ENCODE measurements at regions of chr6 and their contacts with region 1.

Region 1: GRCh38 chr6:11232193-11232769 is at the start of gene NEDD9:
- DNase-seq: peak; percentile 99
- ATAC-seq: peak; percentile 98
- H3K4me3 Mint-ChIP-seq: peak within 1 kb of the TSS; percentile 92
- H3K27ac Mint-ChIP-seq: peak within 1 kb of the TSS; percentile 100
- H3K4me1 Mint-ChIP-seq: peaks cover 72% of the 10 kb centered on the region
- H3K27me3 Mint-ChIP-seq: no peaks in the 10 kb centered on the region
- total RNA-seq, gene NEDD9: 84.5 to 114 TPM

Region 2: GRCh38 chr6:11212625-11213024 is 19.7 kb before region 1 on chr6:
- CTCF ChIA-PET with region 1: interaction called, 11 read pairs
- DNase-seq: no peak
- ATAC-seq: no peak
- H3K4me3 Mint-ChIP-seq: no peak overlapping the region
- H3K27ac Mint-ChIP-seq: peak overlapping the region; percentile 12
- H3K4me1 Mint-ChIP-seq: peaks cover 61% of the 10 kb centered on the region
- H3K27me3 Mint-ChIP-seq: no peaks in the 10 kb centered on the region

Region 3: GRCh38 chr6:11245381-11246256 is 13.3 kb after region 1 on chr6:
- CTCF ChIA-PET with region 1: no interaction called
- DNase-seq: no peak
- ATAC-seq: no peak
- H3K4me3 Mint-ChIP-seq: no peak overlapping the region
- H3K27ac Mint-ChIP-seq: no peak overlapping the region
- H3K4me1 Mint-ChIP-seq: peaks cover 12% of the 10 kb centered on the region
- H3K27me3 Mint-ChIP-seq: no peaks in the 10 kb centered on the region

Region 4: DNA sequence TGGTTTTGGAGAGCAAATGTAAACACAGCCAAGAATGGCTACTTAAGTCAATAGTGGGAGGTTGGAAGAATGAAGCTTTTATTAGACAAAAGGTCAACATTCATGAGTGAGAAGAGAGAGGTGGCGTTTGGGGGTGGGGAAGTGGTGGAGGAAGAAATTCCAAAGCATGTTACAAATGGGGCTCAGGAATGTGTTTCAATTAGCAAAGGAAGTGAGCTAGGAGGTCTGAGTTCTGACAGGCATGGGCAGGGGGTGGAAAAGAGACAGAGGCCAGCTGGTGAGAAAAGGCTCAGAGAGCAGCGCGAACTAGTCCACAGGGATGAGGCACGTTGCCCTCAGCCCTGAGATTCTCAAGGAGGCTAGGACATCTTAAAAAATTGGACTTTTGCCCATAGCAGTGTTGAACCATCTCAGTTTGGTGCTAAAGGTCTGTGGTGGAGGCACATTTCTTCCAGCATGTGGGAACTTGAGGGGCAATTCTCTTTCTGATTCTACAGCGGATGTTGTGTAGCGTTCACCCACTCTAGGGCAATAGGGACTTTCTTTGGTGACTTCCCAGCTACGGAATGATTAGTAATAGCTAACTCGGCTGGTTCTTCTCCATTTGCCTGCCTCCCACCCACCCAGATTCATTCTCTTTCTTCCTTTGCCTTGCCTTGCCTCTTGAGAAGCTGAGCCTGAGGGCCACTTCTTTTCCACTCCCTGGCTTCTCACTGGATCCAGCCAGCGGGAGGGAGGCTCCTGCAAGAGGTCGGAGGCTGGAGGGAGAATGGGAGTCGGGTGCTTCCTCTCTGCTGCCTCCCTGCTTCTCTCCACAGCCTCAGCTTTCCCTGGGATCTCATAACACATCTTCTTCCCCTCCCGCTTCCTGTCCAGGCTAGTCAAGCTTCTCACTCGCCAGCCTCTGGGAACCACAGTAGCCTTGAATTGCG is 45.3 kb after region 1 on chr6:
- CTCF ChIA-PET with region 1: interaction called, 10 read pairs
- DNase-seq: peak; percentile 54
- ATAC-seq: peak; percentile 57
- H3K4me3 Mint-ChIP-seq: peak overlapping the region; percentile 70
- H3K27ac Mint-ChIP-seq: peak overlapping the region; percentile 97
- H3K4me1 Mint-ChIP-seq: peaks cover 52% of the 10 kb centered on the region
- H3K27me3 Mint-ChIP-seq: no peaks in the 10 kb centered on the region